ENCODE measurements at regions of chr11 and their contacts with region 1.

Region 1: DNA sequence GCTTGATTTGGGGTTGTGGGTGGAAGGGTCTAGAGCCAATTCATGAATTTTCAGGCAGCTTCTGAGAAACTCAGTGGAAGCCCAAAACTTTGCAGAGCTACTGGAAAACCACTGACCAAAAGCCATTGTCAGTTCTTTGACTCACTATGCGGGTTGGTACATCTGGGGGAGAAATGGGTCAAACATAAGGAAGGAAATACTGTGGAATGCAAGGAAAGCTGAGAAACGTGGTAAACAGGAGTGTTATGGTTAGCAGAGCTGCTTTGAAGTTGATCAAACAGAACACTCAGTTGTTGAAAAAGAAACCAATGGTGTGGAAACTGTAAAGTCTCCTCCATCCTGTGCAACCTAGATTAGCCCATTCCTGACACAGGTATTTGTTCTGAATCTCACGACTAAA is 6.3 kb upstream of the ABTB2 start:
- DNase-seq: no peak

Region 2: GRCh38 chr11:34417202-34417601 is 53.1 kb after region 1 on chr11:
- intact Hi-C with region 1: no loop called
- DNase-seq: no peak

Region 3: GRCh38 chr11:34487430-34487829 is 123.3 kb after region 1 on chr11:
- intact Hi-C with region 1: loop called (anchors 5 kb)
- DNase-seq: no peak

Region 4: GRCh38 chr11:34565417-34566207 is 201.5 kb after region 1 on chr11:
- intact Hi-C with region 1: no loop called
- DNase-seq: no peak

Measured in posterior cingulate gyrus (tissue), 11 donors.